ENCODE measurements at regions of chr7 and their contacts with region 1.

Region 1: GRCh38 chr7:18384491-18385143 is 110.9 kb upstream of the HDAC9 start:
- DNase-seq: no peak
- H3K4me3 ChIP-seq: no peak overlapping the region
- CTCF ChIP-seq: no peak

Region 2: DNA sequence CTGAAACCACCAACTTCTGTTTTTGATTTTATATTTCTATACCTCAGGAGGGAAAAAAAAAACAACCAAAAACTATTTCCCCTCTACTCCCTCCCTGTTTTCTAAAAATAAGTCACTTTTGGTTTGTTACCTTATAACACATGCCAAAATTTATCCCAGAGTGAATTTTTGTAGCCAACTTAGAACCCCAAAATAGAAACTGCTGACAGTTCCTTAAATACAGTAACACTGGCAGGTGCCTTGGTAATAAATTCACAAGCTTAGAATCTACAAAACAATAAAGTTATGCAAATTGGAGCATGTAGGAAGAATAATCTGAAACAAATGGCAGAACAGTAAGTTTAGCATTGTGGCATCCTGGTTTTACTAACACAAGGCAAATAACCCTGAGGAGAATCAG is 54.1 kb before region 1 on chr7:
- in situ Hi-C with region 1: no loop called
- DNase-seq: no peak
- H3K4me3 ChIP-seq: no peak overlapping the region
- CTCF ChIP-seq: no peak

Region 3: DNA sequence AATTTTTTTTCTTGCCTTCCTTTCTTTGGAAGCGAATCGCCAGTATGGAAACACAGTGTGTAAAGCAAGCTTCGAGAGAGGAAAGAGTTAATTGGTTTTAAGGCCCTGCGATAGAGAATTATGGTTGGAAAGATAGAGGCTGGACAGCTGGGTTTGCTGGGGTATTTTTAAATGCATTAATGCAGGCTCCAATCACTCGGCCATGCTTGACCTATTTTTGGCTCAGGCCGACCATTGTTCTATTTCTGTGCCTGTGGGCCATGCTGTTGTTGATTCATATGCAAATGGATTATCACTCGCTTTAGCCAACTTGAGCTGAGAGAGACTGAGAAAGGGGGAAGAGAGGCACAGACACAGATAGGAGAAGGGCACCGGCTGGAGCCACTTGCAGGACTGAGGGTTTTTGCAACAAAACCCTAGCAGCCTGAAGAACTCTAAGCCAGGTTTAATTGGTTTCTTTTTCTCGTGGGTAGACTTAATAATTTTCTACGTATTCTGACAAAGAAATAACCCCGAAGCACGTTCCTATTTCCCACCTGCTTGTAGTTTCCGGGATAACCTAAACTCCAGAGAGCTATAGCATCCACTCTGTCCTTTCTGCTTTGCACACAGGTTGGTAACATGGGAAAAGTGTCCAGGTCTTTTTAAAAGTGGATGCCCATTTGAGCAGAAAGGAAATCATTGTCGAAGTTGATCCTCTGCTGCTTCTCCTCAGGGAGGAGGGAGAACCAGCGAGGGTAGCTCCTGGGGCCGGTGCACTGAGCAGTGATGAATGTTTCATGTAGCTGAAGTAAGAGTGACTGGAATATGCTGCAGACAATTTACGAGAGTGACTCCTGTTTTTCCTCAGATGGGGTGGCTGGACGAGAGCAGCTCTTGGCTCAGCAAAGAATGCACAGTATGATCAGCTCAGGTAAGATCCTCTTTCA is 111.1 kb after region 1 on chr7 and contains the start of gene HDAC9:
- in situ Hi-C with region 1: loop called (anchors 10 kb)
- DNase-seq: peak; percentile 31
- H3K4me3 ChIP-seq: peak within 1 kb of the TSS; percentile 29
- CTCF ChIP-seq: no peak

Region 4: DNA sequence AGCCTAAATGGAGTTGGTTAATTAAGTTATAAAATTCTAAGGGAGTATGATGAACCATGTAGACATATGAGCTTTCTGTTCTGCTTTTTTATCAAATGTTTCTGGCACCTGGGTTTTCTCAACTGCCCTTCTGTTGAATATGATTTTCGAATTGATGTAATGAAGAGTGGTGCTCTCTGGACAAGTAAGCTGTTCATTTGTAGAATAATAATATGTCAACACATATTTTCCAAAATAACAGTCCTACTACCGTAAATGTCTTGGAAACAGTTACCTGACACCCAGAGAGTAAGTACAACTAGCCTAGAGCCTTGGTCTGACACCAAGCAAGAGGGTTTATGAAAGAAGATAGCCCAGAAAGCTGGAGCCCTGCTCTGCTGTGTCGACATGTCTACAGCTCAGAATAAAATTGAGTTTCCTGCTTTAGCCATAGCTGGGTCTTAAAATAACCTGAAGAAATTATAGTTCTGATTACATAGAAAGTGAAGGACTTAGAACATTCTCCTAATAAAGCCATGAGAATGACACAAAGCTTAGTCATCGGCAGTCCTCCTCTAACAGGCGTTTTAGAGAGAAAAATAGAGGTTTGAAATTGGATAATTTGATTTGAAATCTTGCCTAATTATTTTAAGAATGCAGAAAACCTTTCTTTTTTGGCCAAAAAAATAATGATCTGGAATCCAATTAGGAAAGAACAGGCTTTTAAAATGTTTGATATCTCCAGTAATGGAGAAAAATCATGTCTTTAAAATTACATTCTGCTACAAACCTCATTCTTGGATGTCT is 136.0 kb after region 1 on chr7:
- in situ Hi-C with region 1: no loop called
- DNase-seq: no peak
- H3K4me3 ChIP-seq: no peak overlapping the region
- CTCF ChIP-seq: no peak

Region 5: DNA sequence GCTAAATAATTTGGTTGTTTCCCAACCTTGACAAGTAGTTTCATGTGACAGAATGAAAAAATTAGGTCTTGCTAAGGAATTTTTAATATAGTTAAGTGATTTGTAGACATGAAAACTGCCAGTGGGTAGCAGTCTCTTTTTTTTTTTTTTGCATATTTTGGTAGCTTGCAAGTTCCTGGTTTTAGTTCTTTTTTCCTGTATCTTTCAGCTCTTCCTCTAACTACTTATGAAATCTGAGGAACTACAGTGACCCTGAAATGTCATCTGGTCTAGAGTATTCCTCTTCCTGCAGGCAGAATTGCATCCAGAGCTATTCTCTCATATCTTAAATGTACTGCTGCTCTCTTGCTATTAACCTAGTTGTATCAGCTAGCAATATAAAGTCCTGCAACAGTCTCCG is 271.3 kb after region 1 on chr7:
- in situ Hi-C with region 1: no loop called
- DNase-seq: no peak
- H3K4me3 ChIP-seq: no peak overlapping the region
- CTCF ChIP-seq: no peak

Region 6: DNA sequence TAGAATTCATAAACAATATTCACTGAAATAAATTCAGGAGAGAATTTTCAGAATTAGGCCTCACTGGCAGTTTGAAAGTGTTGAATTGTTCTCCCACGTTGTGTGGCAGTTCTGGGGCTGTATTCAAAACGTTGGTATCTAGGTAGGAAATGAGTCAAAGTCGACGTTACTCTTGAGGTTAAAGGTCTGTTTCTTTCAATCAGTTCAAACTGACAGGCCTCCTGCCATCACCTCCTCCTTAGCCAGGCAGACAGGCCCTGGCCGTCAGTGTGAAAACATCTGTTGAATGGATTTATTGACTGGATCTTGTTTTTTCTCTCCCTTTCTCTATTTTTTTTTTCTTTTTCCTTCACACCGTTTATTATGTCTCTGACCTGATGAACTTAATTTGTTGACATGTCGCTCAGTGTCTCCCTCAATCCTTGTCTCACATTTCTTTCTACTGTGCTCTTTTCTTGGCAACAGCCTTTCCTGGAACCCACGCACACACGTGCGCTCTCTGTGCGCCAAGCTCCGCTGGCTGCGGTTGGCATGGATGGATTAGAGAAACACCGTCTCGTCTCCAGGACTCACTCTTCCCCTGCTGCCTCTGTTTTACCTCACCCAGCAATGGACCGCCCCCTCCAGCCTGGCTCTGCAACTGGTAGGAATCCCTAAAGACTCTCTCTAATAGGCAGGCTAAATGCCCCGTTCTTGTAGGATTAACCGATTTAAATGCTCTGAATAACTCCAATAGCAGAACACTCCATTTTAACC is 342.7 kb after region 1 on chr7:
- in situ Hi-C with region 1: no loop called
- DNase-seq: no peak
- H3K4me3 ChIP-seq: no peak overlapping the region
- CTCF ChIP-seq: no peak